Activated T-helper 2 cell treated with anti-CD3 and anti-CD28 coated beads, Interferon-gamma antibody, Interleukin-2, Interleukin-4, amounts not matched to agents 10 μg/mL and 5 μg/mL and 100 μg/mL, durations not matched to agents 14 hours and 24 hours and 36 hours (primary cell): ENCODE measurements at regions of chr16 and their contacts with region 1.

Region 1: DNA sequence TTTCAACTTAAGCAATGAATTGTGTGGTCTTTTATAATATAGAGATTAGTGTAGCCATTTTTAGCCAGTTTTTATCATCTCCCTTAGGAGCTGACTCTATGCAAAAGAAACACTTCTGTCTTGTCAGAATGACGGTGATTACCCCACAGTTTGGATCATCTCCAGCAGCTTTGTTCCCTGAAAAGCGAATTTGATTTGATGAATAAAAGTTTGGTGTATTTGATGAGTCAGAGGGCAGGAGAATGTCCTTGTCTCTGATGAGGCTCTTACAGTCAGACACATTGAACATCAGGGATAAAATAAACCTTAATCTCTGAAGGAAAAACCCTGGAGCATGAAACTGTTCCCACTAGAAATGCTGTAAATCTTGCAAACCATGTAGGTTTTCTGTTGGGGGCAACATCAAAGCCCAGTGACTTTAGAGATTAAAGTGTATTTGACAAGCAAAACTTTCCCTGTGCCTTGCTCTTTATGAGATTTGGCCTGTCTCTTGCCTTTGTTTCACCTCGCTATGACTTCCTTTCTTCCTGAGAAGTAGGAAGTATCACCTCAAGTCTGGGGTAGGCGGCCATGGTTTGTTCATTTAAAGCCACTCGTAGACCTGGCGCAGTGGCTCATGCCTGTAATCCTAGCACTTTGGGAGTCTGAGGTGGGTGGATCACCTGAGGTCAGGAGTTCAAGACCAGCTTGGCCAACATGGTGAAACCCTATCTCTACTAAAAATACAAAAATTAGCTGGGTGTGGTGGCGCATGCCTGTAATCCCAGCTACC is 209.3 kb downstream of the FTO start:
- DNase-seq: no peak
- H3K4me3 Mint-ChIP-seq: no peak overlapping the region
- H3K27ac Mint-ChIP-seq: peak overlapping the region; percentile 93
- H3K4me1 Mint-ChIP-seq: peaks cover 37% of the 10 kb centered on the region
- H3K27me3 Mint-ChIP-seq: no peaks in the 10 kb centered on the region

Region 2: DNA sequence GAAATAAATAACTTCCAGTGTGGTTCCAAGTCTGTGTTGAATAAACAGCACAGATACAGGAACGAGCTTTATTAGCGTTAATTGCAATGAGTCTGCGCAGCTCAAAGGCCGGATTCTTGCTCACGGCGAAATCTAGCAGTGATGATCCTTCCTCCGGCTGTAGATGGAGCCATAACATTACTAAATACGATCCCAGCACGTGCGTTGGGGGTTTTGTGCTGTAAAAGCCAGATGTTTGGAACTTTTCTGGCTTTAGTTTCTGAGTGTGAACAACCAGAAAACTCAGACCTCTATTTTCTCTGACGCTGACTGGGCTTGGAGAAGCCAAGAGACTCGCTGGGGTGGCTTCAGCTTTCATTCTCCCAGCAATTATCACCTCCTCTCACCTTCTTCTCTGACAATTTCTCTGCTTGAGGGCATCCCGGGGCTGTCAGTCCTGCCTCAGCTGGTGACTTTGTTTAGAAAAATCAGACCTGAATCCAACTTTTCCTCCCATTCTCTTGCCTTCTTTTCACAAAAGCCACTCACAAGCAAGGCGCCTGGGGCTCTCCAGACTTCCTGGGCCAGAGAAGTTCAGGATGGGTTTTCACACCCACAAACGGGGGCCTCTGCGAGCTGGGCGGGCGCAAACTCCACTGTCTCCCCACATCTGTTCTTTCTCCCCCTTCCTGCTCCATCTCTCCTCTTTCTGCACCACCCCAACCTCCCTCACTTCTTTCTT is 363.2 kb before region 1 on chr16:
- intact Hi-C with region 1: loop called (anchors 5 kb)
- DNase-seq: peak; percentile 17
- H3K4me3 Mint-ChIP-seq: no peak overlapping the region
- H3K27ac Mint-ChIP-seq: no peak overlapping the region
- H3K4me1 Mint-ChIP-seq: peaks cover 34% of the 10 kb centered on the region
- H3K27me3 Mint-ChIP-seq: peaks cover 26% of the 10 kb centered on the region

Region 3: DNA sequence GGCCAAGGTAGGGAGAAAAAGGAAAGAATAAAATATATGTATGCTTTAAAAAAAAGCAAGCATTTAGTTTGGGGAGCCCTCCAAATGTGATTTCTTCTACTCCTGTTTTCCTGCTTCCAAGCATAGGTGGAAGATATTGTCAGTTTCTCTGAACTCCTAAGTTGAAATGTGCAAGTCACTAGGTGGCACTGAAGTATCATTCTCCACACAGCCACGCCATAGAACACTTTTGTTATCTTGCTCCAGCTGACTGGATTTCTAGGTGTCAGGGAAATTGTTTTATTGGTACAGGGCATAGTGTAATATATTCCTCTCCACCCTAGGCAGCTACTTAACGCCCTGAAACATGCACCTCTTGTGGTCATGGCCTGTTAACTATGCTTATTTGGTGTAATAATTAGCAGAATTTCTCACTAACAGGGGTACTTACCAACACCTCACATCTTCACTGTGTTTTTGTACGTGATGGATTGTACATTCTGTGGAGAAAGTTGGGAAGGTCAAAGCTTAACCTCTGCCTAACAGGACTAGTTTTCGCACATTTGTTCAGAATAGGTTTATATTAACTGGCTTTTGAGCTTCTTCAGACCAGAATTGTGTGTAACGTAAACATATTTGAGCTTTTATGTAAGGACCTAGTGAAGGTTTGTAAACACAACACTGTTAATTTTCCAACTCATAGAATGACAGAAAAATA is 140.0 kb before region 1 on chr16:
- intact Hi-C with region 1: loop called (anchors 2 kb)
- DNase-seq: no peak
- H3K4me3 Mint-ChIP-seq: no peak overlapping the region
- H3K27ac Mint-ChIP-seq: no peak overlapping the region
- H3K4me1 Mint-ChIP-seq: peaks cover 30% of the 10 kb centered on the region
- H3K27me3 Mint-ChIP-seq: no peaks in the 10 kb centered on the region

Region 4: GRCh38 chr16:53781023-53781605 is 132.2 kb before region 1 on chr16:
- intact Hi-C with region 1: loop called (anchors 1 kb)
- DNase-seq: no peak
- H3K4me3 Mint-ChIP-seq: no peak overlapping the region
- H3K27ac Mint-ChIP-seq: no peak overlapping the region
- H3K4me1 Mint-ChIP-seq: peaks cover 20% of the 10 kb centered on the region
- H3K27me3 Mint-ChIP-seq: no peaks in the 10 kb centered on the region

Region 5: DNA sequence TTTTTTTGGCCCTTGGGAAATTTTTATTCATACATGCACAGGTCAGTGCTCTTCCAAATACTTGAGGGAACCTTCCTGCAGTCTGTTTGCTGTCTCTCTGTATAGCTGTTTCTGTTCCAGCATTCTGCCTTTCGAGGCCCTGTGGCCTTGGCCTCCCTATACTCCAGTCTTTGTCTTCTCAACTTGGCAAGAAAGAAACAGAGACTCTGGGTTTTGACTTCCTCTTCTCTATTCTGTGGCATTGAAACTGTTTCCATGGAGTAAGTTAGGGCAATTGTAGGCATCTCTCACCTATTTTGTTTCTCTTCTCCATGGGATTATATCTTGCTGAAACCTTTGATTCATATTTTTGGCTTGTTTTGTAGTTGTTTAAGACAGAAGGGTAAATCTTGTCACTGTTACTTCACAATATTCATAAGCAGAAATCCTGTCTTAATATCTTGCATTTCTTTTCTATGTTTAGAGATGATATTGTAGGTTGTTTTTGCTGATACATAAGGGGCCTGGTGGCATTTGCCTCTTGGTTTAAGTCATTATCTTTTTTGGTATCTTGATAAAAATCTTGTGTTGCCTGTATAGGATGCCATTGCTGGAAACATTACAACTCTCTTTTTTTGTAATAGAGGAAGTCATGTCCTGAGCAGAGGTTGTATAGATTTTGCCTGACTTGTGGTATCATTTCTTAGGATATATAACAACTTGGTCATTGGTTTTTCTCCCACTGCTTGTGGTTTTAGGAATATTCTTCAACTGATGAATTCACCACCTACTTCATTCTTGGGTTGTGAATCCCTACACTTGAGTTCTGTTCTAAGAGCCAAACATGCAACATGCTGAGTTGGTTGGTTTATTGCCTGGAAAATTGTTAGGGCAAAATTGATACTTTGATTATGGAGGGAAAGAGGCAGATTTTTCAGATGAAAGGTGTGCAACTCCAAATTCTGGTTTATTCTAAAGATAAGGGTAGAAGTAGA is 40.8 kb before region 1 on chr16:
- intact Hi-C with region 1: loop called (anchors 2 kb)
- DNase-seq: no peak
- H3K4me3 Mint-ChIP-seq: peak overlapping the region; percentile 11
- H3K27ac Mint-ChIP-seq: peak overlapping the region; percentile 82
- H3K4me1 Mint-ChIP-seq: peaks cover 26% of the 10 kb centered on the region
- H3K27me3 Mint-ChIP-seq: no peaks in the 10 kb centered on the region

Region 6: GRCh38 chr16:53892155-53892554 is 21.1 kb before region 1 on chr16:
- intact Hi-C with region 1: loop called (anchors 1 kb)
- DNase-seq: peak; percentile 52
- H3K4me3 Mint-ChIP-seq: peak overlapping the region; percentile 5
- H3K27ac Mint-ChIP-seq: peak overlapping the region; percentile 60
- H3K4me1 Mint-ChIP-seq: peaks cover 42% of the 10 kb centered on the region
- H3K27me3 Mint-ChIP-seq: no peaks in the 10 kb centered on the region

Region 7: DNA sequence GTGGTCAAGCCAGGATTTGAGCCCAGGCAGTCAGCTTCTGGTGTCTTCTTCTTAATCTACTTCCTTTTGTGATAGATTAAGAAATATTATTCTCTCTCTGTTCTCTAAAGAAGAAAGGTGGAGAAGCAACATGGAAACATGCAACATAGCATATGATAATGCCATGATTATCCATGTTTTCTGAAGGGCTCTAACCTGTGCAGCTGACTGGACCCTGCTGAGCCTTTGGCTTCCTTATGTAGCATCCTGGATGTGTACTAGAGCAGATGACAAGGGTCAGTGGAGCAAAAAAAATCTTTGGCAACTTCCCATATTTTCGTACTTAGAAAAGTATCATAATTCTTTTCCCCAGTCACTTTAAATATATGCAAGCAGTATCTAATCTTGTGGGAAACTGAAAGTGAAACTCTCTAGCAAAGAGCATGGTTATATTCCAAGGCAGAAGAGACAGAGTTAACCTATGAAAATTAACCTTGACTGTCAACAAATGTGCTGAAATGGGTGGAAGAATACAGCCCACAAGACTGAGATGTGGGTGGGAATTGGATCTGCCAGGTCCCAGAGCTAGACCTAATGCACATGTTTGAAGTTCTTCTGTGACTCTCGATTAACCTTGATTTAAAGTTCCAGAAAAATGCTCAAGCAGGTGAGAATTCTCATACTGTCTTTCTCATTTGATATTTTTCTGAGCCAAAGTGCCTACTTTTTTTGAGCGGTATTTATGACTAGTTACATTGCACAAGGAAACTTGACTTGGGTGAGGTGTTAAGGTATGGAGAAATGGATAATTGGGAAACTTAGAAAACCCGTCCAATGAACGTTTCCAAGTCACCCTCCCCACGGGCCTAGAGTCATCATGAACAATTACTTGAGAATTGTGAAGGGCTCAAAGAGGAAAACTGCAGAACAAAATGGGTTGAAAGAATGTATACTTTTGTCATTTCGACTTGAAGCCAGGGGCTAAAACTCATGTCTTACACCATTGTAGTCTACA is 39.2 kb after region 1 on chr16:
- intact Hi-C with region 1: loop called (anchors 5 kb)
- DNase-seq: no peak
- H3K4me3 Mint-ChIP-seq: peak overlapping the region; percentile 19
- H3K27ac Mint-ChIP-seq: peak overlapping the region; percentile 29
- H3K4me1 Mint-ChIP-seq: peaks cover 31% of the 10 kb centered on the region
- H3K27me3 Mint-ChIP-seq: no peaks in the 10 kb centered on the region